ENCODE measurements at regions of chr4 and their contacts with region 1.

Region 1: GRCh38 chr4:4859390-4859842 is at the start of gene MSX1:
- DNase-seq: peak; percentile 81
- ATAC-seq: peak; percentile 94
- H3K4me3 ChIP-seq: peak within 1 kb of the TSS; percentile 86 to 98 (median 97)
- H3K27ac ChIP-seq: peak within 1 kb of the TSS; percentile 78
- H3K4me1 ChIP-seq: peaks cover 13% of the 10 kb centered on the region
- H3K27me3 ChIP-seq: no peaks in the 10 kb centered on the region; a peak in 1 of 5 replicates
- CTCF ChIP-seq: no peak; the same call in 1 of the 2 replicates
- EP300 ChIP-seq: no peak
- POLR2A ChIP-seq: peak; percentile 90 to 96
- RAD21 ChIP-seq: peak; percentile 55; the same call in 1 of the 2 replicates
- total RNA-seq, gene MSX1: 13.8 and 14.9 TPM in 2 replicates

Region 2: GRCh38 chr4:3572363-3572762 is 1287.1 kb before region 1 on chr4:
- CTCF ChIA-PET with region 1: no interaction called
- POLR2A ChIA-PET with region 1: no interaction called
- in situ Hi-C with region 1: no loop called
- intact Hi-C with region 1: no loop called
- DNase-seq: no peak
- ATAC-seq: peak; percentile 44
- H3K4me3 ChIP-seq: no peak overlapping the region
- H3K27ac ChIP-seq: no peak overlapping the region
- H3K4me1 ChIP-seq: peaks cover 22% of the 10 kb centered on the region
- H3K27me3 ChIP-seq: peaks cover 0 to 3% of the 10 kb centered on the region in 2 experiments; a peak in 3 of 5 replicates
- CTCF ChIP-seq: peak; percentile 54
- EP300 ChIP-seq: no peak
- POLR2A ChIP-seq: no peak
- RAD21 ChIP-seq: no peak

Region 3: DNA sequence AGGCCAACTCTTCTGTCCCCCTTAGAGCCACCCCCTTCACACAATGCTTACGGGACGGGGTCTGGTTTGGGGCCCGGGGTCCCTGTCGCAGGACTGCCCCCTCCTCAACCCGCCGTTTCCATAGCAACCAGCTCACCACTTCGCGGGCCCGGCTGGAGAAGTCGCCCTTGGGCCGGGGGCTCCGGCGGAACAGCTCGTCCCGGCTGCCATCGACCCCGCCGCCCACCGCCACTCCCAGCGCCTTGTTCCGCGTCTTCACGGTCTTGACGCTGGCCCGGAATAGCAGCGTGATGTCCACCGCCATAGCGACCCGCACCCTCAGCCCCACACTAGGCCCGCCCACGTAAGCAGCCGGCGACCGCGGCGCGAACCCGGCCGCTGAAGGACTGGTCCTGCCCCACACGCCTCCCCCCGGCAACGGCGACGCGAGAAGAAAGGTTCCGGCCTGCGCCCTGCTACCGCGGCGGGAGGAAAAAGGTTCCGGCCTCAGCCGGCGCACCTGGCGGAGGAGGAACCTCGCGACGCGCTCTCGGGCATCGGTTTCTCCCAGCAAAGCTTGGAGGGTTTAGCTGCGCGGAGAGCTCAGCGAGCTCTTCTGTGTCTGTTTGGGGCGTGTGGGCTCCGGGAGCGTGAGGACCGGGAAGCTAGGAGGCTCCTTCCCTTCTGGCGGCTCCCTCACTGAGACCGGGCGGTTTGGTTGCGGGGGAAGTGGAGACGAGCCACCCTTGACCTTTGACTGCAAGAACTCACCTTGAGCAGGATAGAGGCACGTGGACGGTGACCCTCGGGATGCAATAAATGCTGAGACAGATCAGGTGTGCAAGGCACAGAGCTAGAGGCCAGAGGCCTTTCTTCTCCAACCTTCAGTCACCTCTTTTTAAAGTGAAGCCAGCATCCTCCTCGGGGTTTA is 317.5 kb before region 1 on chr4 and contains the start of gene STX18:
- CTCF ChIA-PET with region 1: no interaction called
- POLR2A ChIA-PET with region 1: no interaction called
- in situ Hi-C with region 1: no loop called
- intact Hi-C with region 1: loop called (anchors 10 kb)
- DNase-seq: peak; percentile 73
- ATAC-seq: peak; percentile 96
- H3K4me3 ChIP-seq: peak within 1 kb of the TSS; percentile 86 to 94 (median 86)
- H3K27ac ChIP-seq: peak within 1 kb of the TSS; percentile 91
- H3K4me1 ChIP-seq: peaks cover 54% of the 10 kb centered on the region
- H3K27me3 ChIP-seq: no peaks in the 10 kb centered on the region
- CTCF ChIP-seq: peak; percentile 38; the same call in 1 of the 2 replicates
- EP300 ChIP-seq: peak; percentile 58 to 79; a peak in 3 of 4 replicates
- POLR2A ChIP-seq: peak; percentile 70 to 81
- RAD21 ChIP-seq: peak; percentile 74
- total RNA-seq, gene STX18: 37.1 and 41.2 TPM in 2 replicates

Region 4: GRCh38 chr4:4640692-4641091 is 218.7 kb before region 1 on chr4:
- CTCF ChIA-PET with region 1: no interaction called
- POLR2A ChIA-PET with region 1: interaction called, 5 read pairs
- in situ Hi-C with region 1: no loop called
- intact Hi-C with region 1: loop called (anchors 2 kb)
- DNase-seq: peak; percentile 86
- ATAC-seq: peak; percentile 94
- H3K4me3 ChIP-seq: peak overlapping the region; percentile 45 to 70 (median 63)
- H3K27ac ChIP-seq: peak overlapping the region; percentile 96
- H3K4me1 ChIP-seq: peaks cover 55% of the 10 kb centered on the region
- H3K27me3 ChIP-seq: no peaks in the 10 kb centered on the region; a peak in 1 of 5 replicates
- CTCF ChIP-seq: peak; percentile 69
- EP300 ChIP-seq: peak; percentile 46 to 82; a peak in 3 of 4 replicates
- POLR2A ChIP-seq: peak; percentile 51 to 58
- RAD21 ChIP-seq: peak; percentile 71

Region 5: DNA sequence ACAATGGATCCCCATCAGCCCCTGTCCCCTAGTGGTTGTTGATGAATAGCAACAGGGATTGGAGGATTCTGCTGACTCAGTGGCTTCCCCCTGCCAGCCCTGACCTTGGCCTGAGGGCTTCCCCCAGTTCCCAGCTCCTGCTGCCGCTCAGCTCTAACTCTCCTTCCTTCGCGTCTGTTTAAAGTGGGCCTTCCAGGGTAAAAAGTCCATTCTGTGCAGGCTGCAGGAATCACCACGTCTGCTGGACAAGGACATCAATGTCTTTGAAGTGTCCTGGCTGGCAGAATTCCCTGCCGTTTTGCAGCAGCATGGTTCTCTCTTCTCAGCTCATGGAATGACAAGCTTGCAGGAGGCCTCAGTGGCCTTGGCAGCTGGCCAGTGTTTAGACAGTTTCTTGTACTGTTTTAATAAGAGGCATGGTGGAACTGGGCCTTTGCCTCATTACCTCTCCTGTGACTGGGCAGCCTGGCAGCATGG is 165.1 kb before region 1 on chr4:
- CTCF ChIA-PET with region 1: no interaction called
- POLR2A ChIA-PET with region 1: interaction called, 6 read pairs
- in situ Hi-C with region 1: loop called (anchors 5 kb)
- intact Hi-C with region 1: loop called (anchors 5 kb)
- DNase-seq: peak; percentile 92
- ATAC-seq: peak; percentile 89
- H3K4me3 ChIP-seq: peak overlapping the region in 1 of 3 experiments; percentile 31; a peak in 2 of 6 replicates
- H3K27ac ChIP-seq: peak overlapping the region; percentile 76
- H3K4me1 ChIP-seq: peaks cover 64% of the 10 kb centered on the region
- H3K27me3 ChIP-seq: no peaks in the 10 kb centered on the region
- CTCF ChIP-seq: peak; percentile 73
- EP300 ChIP-seq: peak in 1 of 2 experiments; percentile 75; a peak in 2 of 4 replicates
- POLR2A ChIP-seq: no peak
- RAD21 ChIP-seq: peak; percentile 35; the same call in 1 of the 2 replicates

Region 6: DNA sequence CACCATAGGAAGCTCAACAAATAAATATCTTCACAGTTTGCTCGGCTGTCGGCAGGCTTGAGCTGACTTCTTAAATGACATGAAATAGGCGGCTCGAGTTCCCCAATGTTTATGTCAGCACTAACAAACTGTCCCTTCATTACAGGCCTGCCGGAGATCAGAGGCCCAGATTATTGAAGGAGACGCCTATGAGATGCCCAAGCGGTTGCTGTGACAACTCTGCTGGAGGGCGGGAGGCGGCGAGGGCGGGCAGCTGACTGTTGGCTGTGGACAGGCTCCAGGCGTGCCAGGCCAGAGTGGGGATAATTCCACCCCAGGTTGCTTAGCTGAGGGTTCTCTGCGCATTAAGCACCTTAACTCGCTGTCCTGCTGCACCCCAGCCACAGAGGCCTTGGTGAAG is 39.2 kb before region 1 on chr4:
- CTCF ChIA-PET with region 1: no interaction called
- POLR2A ChIA-PET with region 1: interaction called, 11 read pairs
- in situ Hi-C with region 1: no loop called
- intact Hi-C with region 1: no loop called
- DNase-seq: no peak
- ATAC-seq: no peak
- H3K4me3 ChIP-seq: no peak overlapping the region
- H3K27ac ChIP-seq: peak overlapping the region; percentile 66
- H3K4me1 ChIP-seq: peaks cover 64% of the 10 kb centered on the region
- H3K27me3 ChIP-seq: no peaks in the 10 kb centered on the region
- CTCF ChIP-seq: no peak
- EP300 ChIP-seq: no peak
- POLR2A ChIP-seq: no peak
- RAD21 ChIP-seq: no peak

Region 7: DNA sequence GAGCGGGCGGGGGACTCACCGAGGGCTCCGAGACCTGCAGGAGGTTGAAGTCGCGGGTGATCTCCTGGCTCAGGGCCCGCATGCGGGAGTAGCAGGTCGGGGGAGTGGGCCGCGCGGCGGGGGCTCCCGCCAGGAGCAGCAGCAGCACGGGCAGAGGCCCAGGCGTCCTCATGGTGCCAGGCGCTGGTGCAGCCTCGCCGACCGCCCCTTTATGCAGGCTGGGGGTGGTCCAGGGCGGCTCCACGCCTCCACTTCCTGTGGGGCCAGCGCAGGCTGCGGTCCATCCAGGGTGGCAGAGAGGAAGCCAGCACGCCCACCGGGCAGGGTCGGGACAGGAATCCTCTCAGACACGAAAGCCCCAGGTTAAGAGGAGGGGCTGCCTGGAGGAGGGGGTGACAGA is 159.9 kb after region 1 on chr4 and contains the start of gene CYTL1:
- CTCF ChIA-PET with region 1: no interaction called
- POLR2A ChIA-PET with region 1: no interaction called
- in situ Hi-C with region 1: no loop called
- intact Hi-C with region 1: no loop called
- DNase-seq: no peak
- ATAC-seq: no peak
- H3K4me3 ChIP-seq: no peak within 1 kb of the TSS
- H3K27ac ChIP-seq: no peak within 1 kb of the TSS
- H3K4me1 ChIP-seq: no peaks in the 10 kb centered on the region
- H3K27me3 ChIP-seq: peaks cover 0 to 56% of the 10 kb centered on the region in 2 experiments; a peak in 3 of 5 replicates
- CTCF ChIP-seq: no peak
- EP300 ChIP-seq: no peak
- POLR2A ChIP-seq: no peak
- RAD21 ChIP-seq: no peak
- total RNA-seq, gene CYTL1: not detected in 2 replicates

Region 8: DNA sequence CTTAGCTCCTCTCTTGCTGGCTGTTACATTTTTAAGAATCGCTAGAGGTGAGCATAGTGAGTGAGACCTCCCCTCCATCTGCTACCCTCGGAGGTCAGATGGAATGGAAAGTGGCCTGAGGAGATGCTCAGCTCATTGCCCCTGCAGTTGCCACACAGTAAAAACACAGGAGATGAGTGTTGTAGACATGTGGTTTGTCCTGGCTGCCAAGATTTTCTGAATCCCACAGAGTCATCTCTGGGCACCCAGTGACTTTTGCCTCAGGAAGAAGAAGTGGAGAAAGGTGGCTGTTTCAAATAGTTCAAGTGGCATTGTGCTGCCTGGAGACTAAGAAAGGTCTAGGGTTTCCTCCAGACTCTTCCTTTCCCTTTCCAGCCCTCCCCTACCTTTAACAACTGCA is 462.9 kb after region 1 on chr4:
- CTCF ChIA-PET with region 1: no interaction called
- POLR2A ChIA-PET with region 1: no interaction called
- in situ Hi-C with region 1: no loop called
- intact Hi-C with region 1: no loop called
- DNase-seq: no peak
- ATAC-seq: no peak
- H3K4me3 ChIP-seq: no peak overlapping the region
- H3K27ac ChIP-seq: no peak overlapping the region
- H3K4me1 ChIP-seq: no peaks in the 10 kb centered on the region
- H3K27me3 ChIP-seq: peaks cover 0 to 4% of the 10 kb centered on the region in 2 experiments; a peak in 1 of 5 replicates
- CTCF ChIP-seq: no peak
- EP300 ChIP-seq: no peak
- POLR2A ChIP-seq: no peak
- RAD21 ChIP-seq: no peak